CD4-positive, alpha-beta T cell (primary cell): ENCODE measurements at regions of chrX and their contacts with region 1.

Region 1: GRCh38 chrX:130144509-130144908 is 21.1 kb downstream of the AIFM1 start:
- DNase-seq: peak in 1 of 14 experiments; percentile 9
- ATAC-seq: no peak
- H3K4me3 ChIP-seq: no peak overlapping the region
- H3K4me3 Mint-ChIP-seq: no peak overlapping the region
- H3K27ac ChIP-seq: no peak overlapping the region
- H3K27ac Mint-ChIP-seq: no peak overlapping the region
- H3K4me1 ChIP-seq: no peaks in the 10 kb centered on the region
- H3K4me1 Mint-ChIP-seq: no peaks in the 10 kb centered on the region
- H3K27me3 ChIP-seq: no peaks in the 10 kb centered on the region
- H3K27me3 Mint-ChIP-seq: no peaks in the 10 kb centered on the region
- CTCF ChIP-seq: no peak

Region 2: DNA sequence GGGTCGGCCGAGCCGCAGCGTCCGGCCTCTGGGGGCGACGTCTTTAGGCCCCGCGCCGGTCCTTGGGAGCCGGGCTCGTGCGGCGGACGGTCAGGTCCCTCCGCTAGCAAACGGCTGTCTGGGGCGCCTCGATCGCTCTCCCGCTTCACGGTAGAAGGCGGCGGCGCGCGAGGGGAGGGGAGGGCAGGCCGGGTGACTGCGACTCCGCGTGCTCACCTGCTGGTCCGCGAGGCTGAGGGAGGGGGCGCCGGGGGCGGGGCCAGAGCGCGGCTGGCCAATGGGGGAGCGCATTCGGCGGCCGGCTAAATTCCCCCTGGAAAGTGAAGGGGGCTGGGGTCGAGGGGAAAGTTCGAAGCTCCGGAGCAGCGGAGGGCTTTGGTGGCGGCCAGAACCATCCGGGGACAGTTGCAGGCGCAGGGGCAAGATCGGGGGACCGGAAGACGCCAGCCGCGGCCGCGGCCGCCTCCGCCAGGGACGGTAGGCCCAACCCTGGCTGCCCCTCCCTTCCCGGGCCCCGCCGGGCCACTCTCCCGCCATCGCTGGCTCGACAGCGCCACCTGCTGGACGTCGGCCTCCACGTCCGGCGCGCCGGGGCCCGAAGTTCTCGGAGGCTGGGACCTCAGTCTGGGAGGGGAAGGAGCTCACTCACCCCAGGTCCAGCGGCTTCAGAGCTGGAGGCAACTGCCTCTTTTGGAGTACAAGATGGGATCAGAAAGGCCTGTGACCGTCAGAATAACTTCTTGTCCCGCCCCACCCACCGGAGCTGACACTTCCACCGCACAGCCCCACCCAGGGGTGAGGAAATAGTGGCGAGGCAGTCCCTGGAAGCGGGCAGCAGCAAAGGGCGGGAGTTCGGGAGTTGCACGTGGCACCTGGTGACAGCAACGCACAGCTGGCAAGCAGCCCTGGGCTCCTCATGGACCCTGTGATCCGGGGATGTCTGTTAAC is 84.1 kb before region 1 on chrX:
- CTCF ChIA-PET with region 1: no interaction called
- POLR2A ChIA-PET with region 1: no interaction called
- intact Hi-C with region 1: no loop called
- DNase-seq: peak; percentile 50 to 87 (median 77)
- ATAC-seq: peak; percentile 82
- H3K4me3 ChIP-seq: peak overlapping the region; percentile 45
- H3K4me3 Mint-ChIP-seq: peak overlapping the region; percentile 71
- H3K27ac ChIP-seq: no peak overlapping the region
- H3K27ac Mint-ChIP-seq: no peak overlapping the region
- H3K4me1 ChIP-seq: peaks cover 13% of the 10 kb centered on the region
- H3K4me1 Mint-ChIP-seq: peaks cover 10% of the 10 kb centered on the region
- H3K27me3 ChIP-seq: no peaks in the 10 kb centered on the region
- H3K27me3 Mint-ChIP-seq: no peaks in the 10 kb centered on the region
- CTCF ChIP-seq: peak; percentile 78

Region 3: GRCh38 chrX:130190801-130191200 is 46.3 kb after region 1 on chrX:
- CTCF ChIA-PET with region 1: interaction called, 3 read pairs
- POLR2A ChIA-PET with region 1: no interaction called
- intact Hi-C with region 1: loop called (anchors 5 to 10 kb)
- DNase-seq: no peak
- ATAC-seq: no peak
- H3K4me3 ChIP-seq: no peak overlapping the region
- H3K4me3 Mint-ChIP-seq: no peak overlapping the region
- H3K27ac ChIP-seq: no peak overlapping the region
- H3K27ac Mint-ChIP-seq: no peak overlapping the region
- H3K4me1 ChIP-seq: no peaks in the 10 kb centered on the region
- H3K4me1 Mint-ChIP-seq: peaks cover 5% of the 10 kb centered on the region
- H3K27me3 ChIP-seq: no peaks in the 10 kb centered on the region
- H3K27me3 Mint-ChIP-seq: no peaks in the 10 kb centered on the region
- CTCF ChIP-seq: no peak

Region 4: GRCh38 chrX:130196466-130196865 is 52.0 kb after region 1 on chrX:
- CTCF ChIA-PET with region 1: interaction called, 3 read pairs
- POLR2A ChIA-PET with region 1: no interaction called
- intact Hi-C with region 1: loop called (anchors 5 to 10 kb)
- DNase-seq: no peak
- ATAC-seq: no peak
- H3K4me3 ChIP-seq: no peak overlapping the region
- H3K4me3 Mint-ChIP-seq: no peak overlapping the region
- H3K27ac ChIP-seq: no peak overlapping the region
- H3K27ac Mint-ChIP-seq: no peak overlapping the region
- H3K4me1 ChIP-seq: no peaks in the 10 kb centered on the region
- H3K4me1 Mint-ChIP-seq: peaks cover 5% of the 10 kb centered on the region
- H3K27me3 ChIP-seq: no peaks in the 10 kb centered on the region
- H3K27me3 Mint-ChIP-seq: no peaks in the 10 kb centered on the region
- CTCF ChIP-seq: no peak